ENCODE measurements at regions of chr5 and their contacts with region 1.

Region 1: DNA sequence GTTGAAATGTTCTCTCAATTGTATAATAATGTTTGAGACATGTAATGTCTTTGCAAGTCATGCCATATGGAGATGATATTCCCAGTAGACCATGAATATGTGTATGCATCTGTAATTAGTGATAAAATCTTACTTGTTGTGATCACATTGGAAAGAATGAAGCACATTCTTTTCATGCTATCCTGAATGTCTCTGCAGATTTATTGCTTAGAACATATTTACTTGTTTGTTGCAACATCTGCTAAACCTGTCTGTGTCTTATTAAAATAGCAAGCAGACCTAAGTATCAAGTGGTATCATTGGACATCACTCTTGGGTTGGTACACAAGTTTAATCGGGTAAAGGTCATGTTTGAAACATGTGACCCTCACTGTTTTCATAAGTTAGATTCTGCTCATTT is 265.5 kb upstream of the CD180 start:
- DNase-seq: no peak
- ATAC-seq: no peak
- H3K4me3 ChIP-seq: no peak overlapping the region
- H3K27ac ChIP-seq: no peak overlapping the region
- H3K4me1 ChIP-seq: no peaks in the 10 kb centered on the region
- H3K27me3 ChIP-seq: no peaks in the 10 kb centered on the region
- CTCF ChIP-seq: no peak

Region 2: GRCh38 chr5:67262209-67262608 is 199.9 kb before region 1 on chr5:
- CTCF ChIA-PET with region 1: no interaction called
- POLR2A ChIA-PET with region 1: interaction called, 13 read pairs
- in situ Hi-C with region 1: no loop called
- intact Hi-C with region 1: no loop called
- DNase-seq: no peak
- ATAC-seq: no peak
- H3K4me3 ChIP-seq: no peak overlapping the region
- H3K27ac ChIP-seq: no peak overlapping the region
- H3K4me1 ChIP-seq: no peaks in the 10 kb centered on the region
- H3K27me3 ChIP-seq: no peaks in the 10 kb centered on the region
- CTCF ChIP-seq: no peak

Measured in Panc1 (cell line).